ENCODE measurements at regions of chr2 and their contacts with region 1.

Region 1: DNA sequence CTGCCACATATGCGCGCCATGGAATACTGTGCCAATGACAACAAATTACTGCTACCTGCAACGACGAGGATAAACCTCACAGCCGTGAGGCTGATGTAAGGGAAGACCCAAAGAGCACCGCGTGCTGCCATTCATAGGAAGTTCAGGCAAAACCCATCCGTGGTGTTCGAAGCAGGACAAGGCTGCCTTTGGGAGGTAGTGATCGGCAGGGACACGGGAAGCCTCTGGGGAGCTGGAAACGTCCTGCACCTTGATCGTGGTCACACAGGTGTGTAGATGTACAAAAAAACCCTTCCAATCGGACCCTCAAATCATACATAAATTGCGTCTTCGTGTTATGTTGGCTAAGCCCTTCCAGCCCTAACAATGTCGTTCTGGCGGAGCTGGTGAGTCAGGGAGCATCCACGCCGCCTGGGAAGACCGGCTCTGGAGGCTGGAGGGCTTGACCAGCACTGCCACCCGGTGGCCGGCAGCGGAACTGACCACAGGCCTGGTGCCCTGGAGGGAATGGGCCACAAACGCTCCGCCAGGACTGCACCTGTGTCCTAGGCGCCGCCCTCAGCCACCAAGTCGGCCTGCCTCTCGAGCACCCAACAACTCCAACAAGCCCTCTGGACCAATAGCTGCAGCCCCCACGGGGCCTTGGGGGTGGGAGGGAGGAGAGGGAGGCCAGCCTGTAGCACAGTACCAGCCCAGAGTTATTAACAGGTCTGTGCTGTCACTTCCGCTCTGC is 4.1 kb upstream of the NEURL3 start:
- DNase-seq: peak; percentile 87 to 92
- H3K4me3 ChIP-seq: no peak overlapping the region
- H3K27ac ChIP-seq: no peak overlapping the region
- H3K4me1 ChIP-seq: peaks cover 0 to 24% (median 16%) of the 10 kb centered on the region in 4 donors
- H3K27me3 ChIP-seq: no peaks in the 10 kb centered on the region
- CTCF ChIP-seq: peak; percentile 98 to 99

Region 2: GRCh38 chr2:96145036-96145847 is 364.0 kb before region 1 on chr2 and contains the start of gene DUSP2:
- intact Hi-C with region 1: loop called (anchors 10 kb)
- DNase-seq: peak; percentile 71 to 82
- H3K4me3 ChIP-seq: peak within 1 kb of the TSS; percentile 51 to 59
- H3K27ac ChIP-seq: peak within 1 kb of the TSS in 1 of 2 donors; percentile 35
- H3K4me1 ChIP-seq: peaks cover 0 to 39% (median 19%) of the 10 kb centered on the region in 4 donors
- H3K27me3 ChIP-seq: peaks cover 0 to 2% of the 10 kb centered on the region in 2 donors
- CTCF ChIP-seq: no peak

Region 3: GRCh38 chr2:96265840-96266679 is 243.2 kb before region 1 on chr2 and contains the starts of genes CIAO1 and TMEM127:
- intact Hi-C with region 1: loop called (anchors 10 kb)
- DNase-seq: peak; percentile 98 to 99
- H3K4me3 ChIP-seq: peak within 1 kb of the TSS; percentile 70 to 97
- H3K27ac ChIP-seq: peak within 1 kb of the TSS; percentile 88 to 97
- H3K4me1 ChIP-seq: peaks cover 0 to 53% (median 42%) of the 10 kb centered on the region in 4 donors
- H3K27me3 ChIP-seq: no peaks in the 10 kb centered on the region
- CTCF ChIP-seq: peak; percentile 31 to 43

Region 4: GRCh38 chr2:96305091-96305978 is 203.9 kb before region 1 on chr2 and contains the start of gene SNRNP200:
- intact Hi-C with region 1: loop called (anchors 10 kb)
- DNase-seq: peak; percentile 84 to 92
- H3K4me3 ChIP-seq: peak within 1 kb of the TSS; percentile 57 to 69
- H3K27ac ChIP-seq: peak within 1 kb of the TSS; percentile 70 to 84
- H3K4me1 ChIP-seq: peaks cover 3 to 26% (median 12%) of the 10 kb centered on the region in 4 donors
- H3K27me3 ChIP-seq: peaks cover 0 to 4% of the 10 kb centered on the region in 2 donors
- CTCF ChIP-seq: no peak

Measured in tibial artery (tissue), 4 donors.